Dorsolateral prefrontal cortex (tissue), 120 donors: ENCODE measurements at regions of chr5 and their contacts with region 1.

Region 1: GRCh38 chr5:37005946-37006540 is 129.5 kb downstream of the NIPBL start:
- DNase-seq: no peak
- H3K4me3 ChIP-seq: no peak overlapping the region
- H3K27ac ChIP-seq: peak overlapping the region in 2 of 59 donors; percentile 10 to 13
- H3K27me3 ChIP-seq: no peaks in the 10 kb centered on the region
- CTCF ChIP-seq: peak; percentile 55 to 84 (median 73)

Region 2: DNA sequence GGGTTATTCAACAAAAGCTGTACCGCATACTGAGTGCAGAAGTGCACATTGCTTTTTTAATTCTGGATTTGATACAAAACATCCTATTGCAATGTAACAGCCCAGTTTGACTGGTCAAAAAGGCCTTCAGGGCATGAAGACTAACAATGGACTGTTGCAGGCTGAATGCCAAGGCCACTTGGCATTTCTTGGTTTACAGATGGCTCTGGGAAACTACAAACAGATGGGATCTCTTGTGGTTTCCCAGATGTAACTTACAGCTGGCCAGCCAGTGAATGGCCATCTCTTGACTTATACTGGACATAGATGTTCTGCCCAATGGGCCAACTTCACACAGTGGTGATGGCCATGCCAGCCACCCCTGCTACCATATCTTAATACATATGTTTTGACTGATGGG is 976.1 kb before region 1 on chr5:
- intact Hi-C with region 1: no loop called
- DNase-seq: peak in 9 of 10 donors; percentile 22 to 80 (median 51)
- H3K4me3 ChIP-seq: no peak overlapping the region
- H3K27ac ChIP-seq: peak overlapping the region in 2 of 59 donors; percentile 6 to 50
- H3K27me3 ChIP-seq: peaks cover 0 to 18% (median 0%) of the 10 kb centered on the region in 45 donors
- CTCF ChIP-seq: no peak

Region 3: DNA sequence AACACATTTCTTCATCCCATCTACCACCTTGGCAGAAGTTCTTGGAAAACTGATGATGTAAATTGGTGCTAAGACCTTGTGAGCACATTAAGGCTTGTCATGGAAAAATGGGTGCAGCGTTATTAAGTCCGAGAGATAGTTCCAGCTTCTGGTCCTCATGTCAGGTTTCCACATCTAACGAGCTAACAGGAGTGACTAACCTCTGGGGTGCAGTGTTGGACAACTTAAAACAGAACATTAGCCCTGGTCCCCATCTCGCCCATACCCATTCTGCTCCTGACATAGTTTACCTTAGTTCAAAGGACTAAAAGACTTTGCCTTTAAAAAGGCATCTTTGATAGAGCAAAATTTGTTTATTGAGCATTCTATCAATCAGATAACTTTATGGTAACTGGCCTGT is 271.6 kb before region 1 on chr5:
- intact Hi-C with region 1: loop called in 1 of 2 experiments (anchors 5 kb)
- DNase-seq: no peak
- H3K4me3 ChIP-seq: no peak overlapping the region
- H3K27ac ChIP-seq: no peak overlapping the region
- H3K27me3 ChIP-seq: peaks cover 0 to 55% (median 5%) of the 10 kb centered on the region in 45 donors
- CTCF ChIP-seq: peak in 7 of 56 donors; percentile 10 to 31 (median 18)